ENCODE measurements at regions of chr1 and their contacts with region 1.

Region 1: DNA sequence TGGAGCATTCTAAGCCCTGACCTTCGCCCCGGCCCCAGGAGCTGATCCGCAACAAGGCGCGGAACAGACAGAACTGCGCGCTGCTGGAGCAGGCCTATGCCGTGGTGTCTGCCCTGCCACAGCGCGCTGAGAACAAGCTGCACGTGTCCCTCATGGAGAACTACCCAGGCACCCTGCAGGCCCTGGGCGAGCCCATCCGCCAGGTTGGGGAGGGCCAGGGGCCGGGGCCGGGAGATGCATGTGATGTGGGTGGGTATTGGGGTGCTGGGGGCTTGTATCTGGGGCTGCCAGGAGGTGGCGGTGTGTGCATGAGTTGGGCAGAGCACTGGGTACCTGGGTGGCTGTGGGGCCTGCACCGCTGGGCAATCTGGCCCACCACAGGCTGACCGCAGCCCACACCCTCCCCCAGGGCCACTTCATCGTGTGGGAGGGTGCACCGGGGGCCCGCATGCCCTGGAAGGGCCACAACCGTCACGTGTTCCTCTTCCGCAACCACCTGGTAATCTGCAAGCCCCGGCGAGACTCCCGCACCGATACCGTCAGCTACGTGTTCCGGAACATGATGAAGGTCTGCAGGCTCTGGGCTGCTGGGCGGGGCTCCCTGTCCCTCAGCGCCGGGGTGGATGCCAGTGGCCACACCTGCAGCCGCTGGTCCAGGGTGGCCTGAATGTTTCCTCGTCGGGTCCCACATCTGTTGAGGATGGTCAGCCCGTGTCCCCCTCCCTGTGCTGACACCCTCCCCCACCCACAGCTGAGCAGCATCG is 65.8 kb downstream of the TRIM11 start:
- DNase-seq: peak in 1 of 2 donors; percentile 10
- ATAC-seq: peak in 1 of 8 donors; percentile 3
- H3K4me3 ChIP-seq: no peak overlapping the region
- H3K27ac ChIP-seq: no peak overlapping the region
- H3K4me1 ChIP-seq: peaks cover 0 to 22% (median 5%) of the 10 kb centered on the region in 9 donors
- H3K27me3 ChIP-seq: no peaks in the 10 kb centered on the region
- CTCF ChIP-seq: peak in 4 of 9 donors; percentile 17 to 30 (median 22)

Region 2: DNA sequence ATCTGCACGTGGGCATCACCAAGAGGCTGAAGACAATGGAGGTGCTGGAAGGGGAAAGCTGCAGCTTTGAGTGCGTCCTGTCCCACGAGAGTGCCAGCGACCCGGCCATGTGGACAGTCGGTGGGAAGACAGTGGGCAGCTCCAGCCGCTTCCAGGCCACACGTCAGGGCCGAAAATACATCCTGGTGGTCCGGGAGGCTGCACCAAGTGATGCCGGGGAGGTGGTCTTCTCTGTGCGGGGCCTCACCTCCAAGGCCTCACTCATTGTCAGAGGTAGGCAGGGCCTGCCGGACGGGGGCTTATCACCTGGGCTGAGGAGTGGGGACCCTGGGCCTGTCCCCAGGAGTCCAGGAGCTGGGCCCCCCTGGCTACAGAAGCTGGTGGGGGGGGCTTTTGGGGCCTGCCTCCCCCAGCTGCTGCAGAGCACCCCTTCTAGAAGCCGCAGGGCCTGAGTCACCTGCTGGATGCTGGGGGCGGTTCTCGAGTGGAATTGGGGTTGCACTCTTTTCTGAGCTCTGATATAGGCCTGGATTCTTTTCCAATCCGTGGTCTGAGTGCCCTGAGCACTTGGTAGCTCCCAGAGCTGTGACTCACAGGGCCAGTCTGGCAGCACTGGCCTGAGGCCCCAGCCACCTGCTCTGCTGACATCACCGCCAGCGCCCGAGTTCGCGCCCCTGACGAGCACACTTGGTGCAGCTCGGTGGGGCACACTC is 58.8 kb before region 1 on chr1:
- intact Hi-C with region 1: loop called in 1 of 10 experiments (anchors 10 kb)
- DNase-seq: peak in 1 of 2 donors; percentile 31
- ATAC-seq: peak in 6 of 8 donors; percentile 7 to 67 (median 46)
- H3K4me3 ChIP-seq: no peak overlapping the region
- H3K27ac ChIP-seq: peak overlapping the region in 1 of 10 donors; percentile 20
- H3K4me1 ChIP-seq: peaks cover 0 to 7% (median 0%) of the 10 kb centered on the region in 9 donors
- H3K27me3 ChIP-seq: no peaks in the 10 kb centered on the region
- CTCF ChIP-seq: no peak

Region 3: DNA sequence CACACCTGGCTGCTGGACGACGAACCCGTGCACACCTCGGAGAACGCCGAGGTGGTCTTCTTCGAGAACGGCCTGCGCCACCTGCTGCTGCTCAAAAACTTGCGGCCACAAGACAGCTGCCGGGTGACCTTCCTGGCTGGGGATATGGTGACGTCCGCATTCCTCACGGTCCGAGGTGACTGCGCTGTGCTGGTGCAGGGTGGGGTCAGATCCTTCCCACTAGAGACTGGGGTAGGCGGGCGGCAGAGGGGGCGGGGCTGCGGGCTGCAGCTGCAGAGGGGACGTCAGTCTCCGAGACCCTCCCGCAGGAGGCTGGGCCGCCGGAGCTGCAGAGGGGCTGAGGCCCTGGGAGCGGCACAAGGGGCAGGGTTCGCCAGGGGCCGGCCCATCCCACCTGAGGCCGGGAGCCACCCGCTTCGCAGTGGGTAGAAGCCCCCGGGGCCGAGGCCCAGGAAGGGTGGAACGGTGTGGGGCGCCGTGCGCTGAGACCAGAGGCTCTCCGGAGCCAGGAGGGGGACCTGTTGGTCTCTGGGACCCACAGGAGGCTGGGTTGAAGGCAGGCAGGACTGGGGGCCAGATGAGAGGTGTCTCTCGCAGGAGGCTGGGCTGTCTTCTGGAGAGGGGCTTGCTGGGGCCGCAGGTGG is 24.8 kb before region 1 on chr1:
- intact Hi-C with region 1: no loop called
- DNase-seq: peak in 1 of 2 donors; percentile 11
- ATAC-seq: no peak
- H3K4me3 ChIP-seq: no peak overlapping the region
- H3K27ac ChIP-seq: no peak overlapping the region
- H3K4me1 ChIP-seq: peaks cover 0 to 16% (median 0%) of the 10 kb centered on the region in 9 donors
- H3K27me3 ChIP-seq: no peaks in the 10 kb centered on the region
- CTCF ChIP-seq: no peak

Region 4: DNA sequence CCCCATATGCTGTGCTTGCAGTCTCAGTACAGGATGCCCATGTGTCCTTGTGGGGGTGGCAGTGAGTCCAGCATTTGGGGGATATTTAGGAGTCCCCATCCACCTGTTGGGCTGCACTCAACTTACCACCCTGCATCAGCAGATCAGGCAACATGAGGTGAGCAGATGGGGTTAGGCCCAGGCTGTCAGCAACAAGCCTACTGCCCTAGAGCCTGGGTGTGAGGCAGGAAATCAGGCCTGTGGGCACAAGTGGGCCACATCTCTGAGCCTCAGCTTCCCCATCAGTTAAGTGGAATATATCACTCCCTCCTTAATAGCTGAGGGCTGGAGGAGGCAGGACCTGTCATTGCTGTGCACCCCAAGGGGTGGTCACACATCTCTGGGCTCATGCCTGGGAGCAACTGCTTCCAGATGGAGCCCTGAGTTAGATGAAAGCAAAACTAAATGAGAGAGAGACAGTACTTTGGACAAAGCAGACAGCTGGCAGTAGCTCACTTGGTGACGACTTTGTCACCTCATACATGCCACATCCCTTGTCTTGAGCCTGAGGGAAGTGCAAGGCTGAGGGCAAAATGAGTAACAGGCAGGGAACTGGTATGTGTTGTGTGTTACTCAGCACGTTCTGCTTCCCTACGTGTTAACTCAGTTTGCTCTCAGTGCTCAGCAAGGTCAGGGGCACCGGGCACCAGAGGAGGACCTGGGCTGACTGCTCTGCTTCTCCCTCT is 17.3 kb after region 1 on chr1:
- intact Hi-C with region 1: no loop called
- DNase-seq: peak in 1 of 2 donors; percentile 3
- ATAC-seq: peak in 1 of 8 donors; percentile 0
- H3K4me3 ChIP-seq: no peak overlapping the region
- H3K27ac ChIP-seq: peak overlapping the region in 8 of 10 donors; percentile 44 to 88 (median 64)
- H3K4me1 ChIP-seq: peaks cover 0 to 50% (median under 1%) of the 10 kb centered on the region in 9 donors
- H3K27me3 ChIP-seq: no peaks in the 10 kb centered on the region
- CTCF ChIP-seq: no peak

Region 5: DNA sequence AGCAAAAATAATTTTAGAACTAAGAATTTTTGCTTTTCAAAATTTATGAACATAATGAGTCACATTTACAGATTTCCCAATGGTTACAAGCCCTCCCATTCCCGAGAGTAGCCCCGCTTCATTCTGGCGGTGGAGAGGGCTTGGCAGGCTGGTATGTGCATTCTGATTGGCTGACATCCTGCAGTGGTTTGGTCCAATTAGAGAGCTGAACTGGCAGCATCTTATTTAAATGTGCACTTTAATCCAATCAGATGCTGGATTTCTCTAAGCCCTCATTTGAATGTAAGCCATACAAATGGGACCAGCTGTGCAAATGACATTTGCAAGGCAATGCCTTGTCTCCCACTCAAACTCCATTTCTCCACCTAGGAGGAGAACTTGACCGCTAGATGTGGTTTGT is 93.8 kb after region 1 on chr1:
- intact Hi-C with region 1: no loop called
- DNase-seq: no peak
- ATAC-seq: no peak
- H3K4me3 ChIP-seq: no peak overlapping the region
- H3K27ac ChIP-seq: no peak overlapping the region
- H3K4me1 ChIP-seq: no peaks in the 10 kb centered on the region
- H3K27me3 ChIP-seq: peaks cover 0 to 42% (median 18%) of the 10 kb centered on the region in 7 donors
- CTCF ChIP-seq: no peak